Activated CD8-positive, alpha-beta T cell treated with anti-CD3 and anti-CD28 coated beads, Interleukin-2, amount 10 ng/mL, durations not matched to agents 7 days and 5 days (primary cell): ENCODE measurements at regions of chr11 and their contacts with region 1.

Region 1: GRCh38 chr11:12301379-12301778 is 76.0 kb upstream of the PARVA start:
- DNase-seq: no peak
- ATAC-seq: no peak
- H3K4me3 Mint-ChIP-seq: no peak overlapping the region
- H3K27ac Mint-ChIP-seq: no peak overlapping the region
- H3K4me1 Mint-ChIP-seq: no peaks in the 10 kb centered on the region
- H3K27me3 Mint-ChIP-seq: no peaks in the 10 kb centered on the region

Region 2: DNA sequence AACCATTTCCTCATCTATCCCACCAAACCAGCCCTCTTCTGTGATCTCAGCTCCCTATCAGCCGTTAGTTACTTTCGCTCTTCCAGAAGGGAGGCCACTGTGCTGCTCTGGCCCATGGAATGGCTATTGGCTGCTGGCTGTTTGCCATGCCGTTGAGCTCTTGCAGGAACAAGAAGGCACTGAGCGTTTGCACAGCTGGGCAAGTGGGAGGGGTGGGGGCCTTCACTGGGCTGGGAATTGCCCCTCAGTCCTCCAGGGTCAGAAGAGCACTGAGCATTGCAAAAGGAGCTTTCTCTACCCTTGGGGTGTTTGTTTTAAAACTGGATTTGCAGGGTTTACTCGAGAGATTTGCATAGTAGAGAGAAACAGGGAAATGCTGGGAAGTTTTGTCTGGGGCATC is 53.0 kb before region 1 on chr11:
- CTCF ChIA-PET with region 1: no interaction called
- POLR2A ChIA-PET with region 1: no interaction called
- DNase-seq: no peak
- ATAC-seq: no peak
- H3K4me3 Mint-ChIP-seq: no peak overlapping the region
- H3K27ac Mint-ChIP-seq: no peak overlapping the region
- H3K4me1 Mint-ChIP-seq: peaks cover under 1% of the 10 kb centered on the region
- H3K27me3 Mint-ChIP-seq: no peaks in the 10 kb centered on the region

Region 3: DNA sequence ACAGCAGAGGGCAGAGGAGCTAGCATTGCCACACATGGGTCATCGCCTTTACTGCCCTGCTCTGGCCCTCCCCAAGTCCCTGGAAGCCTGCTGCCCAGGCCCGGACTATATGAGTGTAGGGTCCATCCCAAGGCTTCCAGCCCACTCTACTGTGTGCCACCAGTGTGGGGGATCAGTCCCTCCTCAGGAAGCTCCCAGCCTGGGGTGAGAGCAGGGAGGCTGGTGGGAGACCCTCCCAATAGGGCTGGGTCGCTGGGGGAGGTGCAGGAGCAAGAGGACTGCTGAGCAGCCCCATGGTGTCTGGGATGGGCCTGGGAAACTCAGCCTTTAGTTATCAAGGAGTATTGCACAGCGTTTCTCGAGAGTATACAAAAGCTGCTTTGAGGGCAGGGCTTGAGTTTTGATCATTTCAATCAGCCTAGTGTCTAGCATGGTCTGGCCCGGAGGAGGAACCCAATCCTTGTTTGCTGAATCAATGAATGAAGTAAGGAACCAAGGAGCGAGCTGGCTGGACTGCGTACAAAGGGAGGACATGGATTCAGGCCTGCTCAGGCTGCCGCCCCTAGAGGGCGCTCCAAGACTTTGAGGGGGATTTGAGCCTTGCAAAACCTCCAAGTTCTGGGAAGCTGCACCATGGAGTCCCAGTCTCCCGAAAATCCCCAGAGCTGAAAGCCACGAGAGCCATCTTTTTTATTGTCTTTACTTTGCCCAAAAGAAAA is 13.0 kb before region 1 on chr11:
- CTCF ChIA-PET with region 1: interaction called, 13 read pairs
- POLR2A ChIA-PET with region 1: no interaction called
- DNase-seq: peak; percentile 66
- ATAC-seq: peak; percentile 42
- H3K4me3 Mint-ChIP-seq: no peak overlapping the region
- H3K27ac Mint-ChIP-seq: no peak overlapping the region
- H3K4me1 Mint-ChIP-seq: peaks cover 18% of the 10 kb centered on the region
- H3K27me3 Mint-ChIP-seq: no peaks in the 10 kb centered on the region